ENCODE measurements at regions of chr1 and their contacts with region 1.

Region 1: GRCh38 chr1:85109475-85109874 is 61.2 kb upstream of the MCOLN3 start:
- DNase-seq: peak; percentile 53
- ATAC-seq: peak; percentile 100
- H3K4me3 ChIP-seq: no peak overlapping the region
- H3K27ac ChIP-seq: no peak overlapping the region
- H3K4me1 ChIP-seq: no peaks in the 10 kb centered on the region
- H3K27me3 ChIP-seq: no peaks in the 10 kb centered on the region
- CTCF ChIP-seq: peak; percentile 77 to 86 (median 85)
- POLR2A ChIP-seq: no peak
- RAD21 ChIP-seq: peak; percentile 89

Region 2: DNA sequence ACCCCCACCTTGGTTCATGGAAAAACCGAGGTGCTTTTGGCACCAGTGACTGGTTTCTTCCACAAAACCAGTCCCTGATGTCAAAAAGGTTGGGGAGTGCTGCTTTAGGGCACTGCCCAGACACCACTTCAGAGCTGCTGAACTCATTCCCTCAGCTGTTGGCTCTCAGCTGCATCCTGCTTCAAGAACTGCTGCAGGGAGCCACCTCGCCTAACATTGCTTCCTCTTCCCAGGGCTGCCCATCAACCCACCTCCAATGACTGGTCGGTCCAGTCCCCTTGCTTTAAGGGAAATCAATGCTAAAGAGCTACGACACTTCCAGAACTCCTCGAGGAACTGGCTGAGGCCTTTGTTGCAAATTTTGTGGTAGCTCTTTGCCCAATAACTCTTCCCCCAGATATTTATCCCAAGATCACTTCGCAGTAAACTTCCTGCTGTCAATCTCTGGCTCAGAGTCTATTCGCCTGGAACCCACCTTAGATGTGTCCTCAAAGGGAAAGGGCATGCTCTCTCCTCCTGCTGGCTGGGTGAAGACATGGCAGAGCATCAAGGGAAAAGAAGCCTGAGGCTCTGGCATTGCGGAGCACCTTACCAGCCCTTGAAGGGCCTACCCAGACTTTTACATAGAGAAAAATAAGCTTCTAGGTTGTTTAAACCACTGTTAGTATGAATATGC is 121.0 kb after region 1 on chr1:
- CTCF ChIA-PET with region 1: interaction called, 13 read pairs
- POLR2A ChIA-PET with region 1: no interaction called
- RAD21 ChIA-PET with region 1: no interaction called
- intact Hi-C with region 1: no loop called
- DNase-seq: peak; percentile 29
- ATAC-seq: peak; percentile 76
- H3K4me3 ChIP-seq: no peak overlapping the region
- H3K27ac ChIP-seq: no peak overlapping the region
- H3K4me1 ChIP-seq: peaks cover 18 to 19% of the 10 kb centered on the region in 2 experiments
- H3K27me3 ChIP-seq: no peaks in the 10 kb centered on the region
- CTCF ChIP-seq: peak; percentile 32 to 63 (median 55); a peak in 5 of 6 replicates
- POLR2A ChIP-seq: no peak
- RAD21 ChIP-seq: peak; percentile 43

Region 3: DNA sequence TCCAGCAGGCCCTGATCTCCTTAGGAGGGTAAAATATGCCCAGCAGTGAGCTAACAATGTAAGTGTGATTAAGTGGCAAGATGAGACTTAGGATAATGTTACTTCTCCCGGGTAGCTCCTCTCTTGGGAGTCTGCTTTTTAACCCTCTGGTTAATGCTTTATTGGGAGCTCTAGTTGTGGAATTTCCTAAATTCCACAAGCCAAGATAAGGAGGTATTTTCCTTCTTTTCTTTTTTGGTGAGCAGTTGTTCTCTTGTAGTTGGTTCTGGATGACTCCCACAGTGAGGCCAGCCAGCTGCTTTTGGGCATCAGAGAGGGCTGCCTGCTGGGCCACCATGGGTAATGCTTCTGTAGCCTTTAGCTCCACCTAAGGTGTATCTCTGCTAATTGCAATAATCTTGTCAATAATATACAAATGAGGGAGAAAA is 130.7 kb after region 1 on chr1:
- CTCF ChIA-PET with region 1: interaction called, 40 read pairs
- POLR2A ChIA-PET with region 1: no interaction called
- RAD21 ChIA-PET with region 1: interaction called, 7 to 9 read pairs
- intact Hi-C with region 1: loop called (anchors 1 kb)
- DNase-seq: no peak
- ATAC-seq: peak; percentile 90
- H3K4me3 ChIP-seq: no peak overlapping the region
- H3K27ac ChIP-seq: no peak overlapping the region
- H3K4me1 ChIP-seq: peaks cover 4 to 10% of the 10 kb centered on the region in 2 experiments; a peak in 3 of 4 replicates
- H3K27me3 ChIP-seq: no peaks in the 10 kb centered on the region
- CTCF ChIP-seq: peak; percentile 33 to 74 (median 42); a peak in 5 of 6 replicates
- POLR2A ChIP-seq: no peak
- RAD21 ChIP-seq: peak; percentile 87

Measured in HCT116 (cell line).